ENCODE measurements at regions of chr4 and their contacts with region 1.

Region 1: GRCh38 chr4:164937576-164938270 is 39.7 kb downstream of the TRIM61 start:
- DNase-seq: peak; percentile 50
- ATAC-seq: peak; percentile 89
- H3K4me3 Mint-ChIP-seq: no peak overlapping the region
- H3K27ac Mint-ChIP-seq: no peak overlapping the region
- H3K4me1 Mint-ChIP-seq: peaks cover 28% of the 10 kb centered on the region
- H3K27me3 Mint-ChIP-seq: no peaks in the 10 kb centered on the region
- CTCF ChIP-seq: no peak

Region 2: DNA sequence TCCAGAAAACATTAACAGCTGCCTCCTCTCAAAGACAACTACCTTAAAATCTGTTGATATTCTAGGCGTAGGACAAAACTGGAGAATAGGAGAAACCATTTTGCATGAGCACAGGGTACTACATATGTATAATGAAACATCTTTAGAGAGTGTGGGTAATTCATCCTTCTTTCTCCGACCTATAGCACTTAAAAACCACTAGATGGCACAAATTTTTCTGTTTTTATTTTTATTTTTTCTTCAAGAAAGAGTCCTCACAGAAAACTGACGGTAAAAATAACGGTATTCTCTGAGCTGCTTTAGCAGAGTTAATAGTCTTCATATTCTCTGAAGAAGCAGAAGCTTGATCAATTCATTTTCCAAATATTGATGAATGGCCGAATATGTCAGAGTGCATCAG is 169.2 kb before region 1 on chr4:
- CTCF ChIA-PET with region 1: interaction called, 60 read pairs
- POLR2A ChIA-PET with region 1: no interaction called
- DNase-seq: no peak
- ATAC-seq: peak; percentile 68
- H3K4me3 Mint-ChIP-seq: no peak overlapping the region
- H3K27ac Mint-ChIP-seq: no peak overlapping the region
- H3K4me1 Mint-ChIP-seq: peaks cover 9% of the 10 kb centered on the region; the same call in 1 of the 2 replicates
- H3K27me3 Mint-ChIP-seq: no peaks in the 10 kb centered on the region
- CTCF ChIP-seq: 0 out of 2 replicates have a peak, but pooled peaks have one; percentile 22

Region 3: GRCh38 chr4:164779811-164780216 is 157.9 kb before region 1 on chr4:
- CTCF ChIA-PET with region 1: interaction called, 32 read pairs
- POLR2A ChIA-PET with region 1: no interaction called
- DNase-seq: peak; percentile 53
- ATAC-seq: peak; percentile 74
- H3K4me3 Mint-ChIP-seq: no peak overlapping the region
- H3K27ac Mint-ChIP-seq: no peak overlapping the region
- H3K4me1 Mint-ChIP-seq: peaks cover 7% of the 10 kb centered on the region
- H3K27me3 Mint-ChIP-seq: no peaks in the 10 kb centered on the region
- CTCF ChIP-seq: peak; percentile 90

Region 4: GRCh38 chr4:164949448-164950143 is 11.9 kb after region 1 on chr4:
- CTCF ChIA-PET with region 1: interaction called, 38 read pairs
- POLR2A ChIA-PET with region 1: no interaction called
- DNase-seq: peak; percentile 65
- ATAC-seq: peak; percentile 93
- H3K4me3 Mint-ChIP-seq: no peak overlapping the region
- H3K27ac Mint-ChIP-seq: no peak overlapping the region
- H3K4me1 Mint-ChIP-seq: peaks cover 9% of the 10 kb centered on the region
- H3K27me3 Mint-ChIP-seq: no peaks in the 10 kb centered on the region; the same call in 1 of the 2 replicates
- CTCF ChIP-seq: peak; percentile 47; the same call in 1 of the 2 replicates

Region 5: GRCh38 chr4:164977243-164978164 is 39.8 kb after region 1 on chr4 and contains the start of gene TRIM61:
- CTCF ChIA-PET with region 1: interaction called, 14 read pairs
- POLR2A ChIA-PET with region 1: no interaction called
- DNase-seq: peak; percentile 80
- ATAC-seq: peak; percentile 96
- H3K4me3 Mint-ChIP-seq: peak within 1 kb of the TSS; percentile 91
- H3K27ac Mint-ChIP-seq: peak within 1 kb of the TSS; percentile 32
- H3K4me1 Mint-ChIP-seq: peaks cover 17% of the 10 kb centered on the region
- H3K27me3 Mint-ChIP-seq: no peaks in the 10 kb centered on the region; the same call in 1 of the 2 replicates
- CTCF ChIP-seq: no peak
- total RNA-seq, gene TRIM61: 2.8 to 3.0 TPM (median 2.8 TPM) in 3 replicates

Region 6: DNA sequence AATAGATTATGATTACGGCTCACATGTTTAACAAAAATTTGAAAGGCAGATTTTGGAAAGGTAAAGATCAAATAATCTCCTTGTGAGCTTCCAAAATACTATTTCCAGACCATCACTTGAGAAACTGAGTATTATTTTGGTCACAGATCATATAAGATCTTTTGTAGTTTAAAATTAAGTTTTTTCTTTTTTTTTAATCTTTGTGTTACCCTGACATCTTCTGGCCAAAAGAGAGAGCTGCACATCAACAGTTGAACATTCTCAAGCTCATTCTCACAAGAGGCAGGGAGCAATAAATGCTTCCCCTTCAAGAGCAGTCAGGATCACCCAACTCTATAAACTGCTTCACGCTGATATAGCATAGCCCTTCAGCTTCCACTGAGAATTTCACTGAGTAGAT is 159.1 kb after region 1 on chr4:
- CTCF ChIA-PET with region 1: interaction called, 47 read pairs
- POLR2A ChIA-PET with region 1: no interaction called
- DNase-seq: no peak
- ATAC-seq: peak; percentile 83
- H3K4me3 Mint-ChIP-seq: no peak overlapping the region
- H3K27ac Mint-ChIP-seq: no peak overlapping the region
- H3K4me1 Mint-ChIP-seq: no peaks in the 10 kb centered on the region
- H3K27me3 Mint-ChIP-seq: no peaks in the 10 kb centered on the region
- CTCF ChIP-seq: peak; percentile 44

Measured in WTC11 (cell line).